Heart left ventricle (tissue), 16 donors: ENCODE measurements at regions of chr13 and their contacts with region 1.

Region 1: GRCh38 chr13:31824705-31825517 is 85.6 kb downstream of the RXFP2 start:
- DNase-seq: no peak
- ATAC-seq: peak; percentile 39 to 81 (median 74)
- H3K4me3 ChIP-seq: no peak overlapping the region
- H3K27ac ChIP-seq: no peak overlapping the region
- H3K4me1 ChIP-seq: peaks cover 0 to 6% (median 0%) of the 10 kb centered on the region in 12 donors
- H3K27me3 ChIP-seq: no peaks in the 10 kb centered on the region
- CTCF ChIP-seq: peak; percentile 10 to 64 (median 46)
- POLR2A ChIP-seq: no peak

Region 2: GRCh38 chr13:31896427-31896826 is 71.5 kb after region 1 on chr13:
- intact Hi-C with region 1: no loop called
- DNase-seq: peak in 4 of 5 donors; percentile 33 to 57 (median 45)
- ATAC-seq: peak; percentile 77 to 87 (median 85)
- H3K4me3 ChIP-seq: no peak overlapping the region
- H3K27ac ChIP-seq: peak overlapping the region; percentile 2 to 83 (median 72)
- H3K4me1 ChIP-seq: peaks cover 9 to 79% (median 58%) of the 10 kb centered on the region in 12 donors
- H3K27me3 ChIP-seq: no peaks in the 10 kb centered on the region
- CTCF ChIP-seq: no peak
- POLR2A ChIP-seq: no peak

Region 3: GRCh38 chr13:31951215-31951678 is 126.3 kb after region 1 on chr13:
- intact Hi-C with region 1: no loop called
- DNase-seq: peak; percentile 49 to 87 (median 69)
- ATAC-seq: peak; percentile 49 to 94 (median 88)
- H3K4me3 ChIP-seq: no peak overlapping the region
- H3K27ac ChIP-seq: peak overlapping the region in 8 of 12 donors; percentile 1 to 64 (median 33)
- H3K4me1 ChIP-seq: peaks cover 0 to 36% (median 9%) of the 10 kb centered on the region in 12 donors
- H3K27me3 ChIP-seq: no peaks in the 10 kb centered on the region
- CTCF ChIP-seq: no peak
- POLR2A ChIP-seq: no peak

Region 4: GRCh38 chr13:31965361-31966066 is 140.6 kb after region 1 on chr13:
- intact Hi-C with region 1: loop called in 1 of 10 experiments (anchors 10 kb)
- DNase-seq: no peak
- ATAC-seq: peak in 1 of 4 donors; percentile 54
- H3K4me3 ChIP-seq: no peak overlapping the region
- H3K27ac ChIP-seq: peak overlapping the region in 7 of 12 donors; percentile 5 to 44 (median 30)
- H3K4me1 ChIP-seq: peaks cover under 1 to 64% (median 40%) of the 10 kb centered on the region in 12 donors
- H3K27me3 ChIP-seq: no peaks in the 10 kb centered on the region
- CTCF ChIP-seq: no peak
- POLR2A ChIP-seq: no peak